ENCODE measurements at regions of chr19 and their contacts with region 1.

Region 1: DNA sequence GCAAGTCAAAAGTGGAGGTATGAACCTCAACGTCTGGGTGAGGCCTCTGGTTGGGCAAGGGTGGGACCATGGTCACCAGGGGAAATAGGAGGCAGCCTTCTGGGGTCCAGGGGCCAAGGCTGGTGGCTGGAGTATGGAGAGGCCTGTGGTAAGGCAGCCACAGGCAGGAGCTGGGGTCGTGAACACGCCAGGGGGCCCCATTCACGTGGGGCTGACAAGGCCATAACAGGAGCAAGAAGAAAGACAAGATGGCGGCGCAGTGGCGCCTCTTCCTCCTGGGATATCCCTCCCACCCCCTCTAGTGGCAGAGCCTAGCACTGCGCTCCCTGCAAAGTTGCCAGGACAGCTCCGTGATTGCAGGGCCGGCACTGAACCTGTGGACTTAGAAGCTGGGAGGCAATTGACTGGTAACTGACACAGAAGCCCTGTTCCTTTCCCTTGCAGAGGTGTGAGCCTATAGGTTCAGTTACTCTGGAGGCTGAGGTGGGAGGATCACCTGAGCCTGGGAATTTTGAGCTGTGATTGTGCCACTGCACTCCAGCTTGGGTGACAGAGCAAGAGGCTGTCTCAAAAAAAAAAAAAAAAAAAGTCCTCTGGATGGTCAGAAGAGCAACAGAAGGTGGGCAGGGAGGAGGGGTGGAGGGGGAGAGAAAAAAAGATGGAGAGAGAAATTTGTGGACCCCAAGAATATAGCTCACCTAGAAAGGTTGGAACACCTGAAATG is 19.7 kb upstream of the EDDM13 start:
- DNase-seq: peak; percentile 45
- H3K4me3 Mint-ChIP-seq: no peak overlapping the region
- H3K27ac Mint-ChIP-seq: no peak overlapping the region
- H3K4me1 Mint-ChIP-seq: no peaks in the 10 kb centered on the region
- H3K27me3 Mint-ChIP-seq: no peaks in the 10 kb centered on the region

Region 2: GRCh38 chr19:56080669-56081401 is 172.0 kb before region 1 on chr19:
- intact Hi-C with region 1: loop called (anchors 2 kb)
- DNase-seq: peak; percentile 43
- H3K4me3 Mint-ChIP-seq: peak overlapping the region; percentile 76
- H3K27ac Mint-ChIP-seq: no peak overlapping the region
- H3K4me1 Mint-ChIP-seq: peaks cover 9% of the 10 kb centered on the region
- H3K27me3 Mint-ChIP-seq: no peaks in the 10 kb centered on the region

Region 3: GRCh38 chr19:56333505-56333904 is 80.6 kb after region 1 on chr19:
- intact Hi-C with region 1: loop called (anchors 1 kb)
- DNase-seq: peak; percentile 28
- H3K4me3 Mint-ChIP-seq: no peak overlapping the region
- H3K27ac Mint-ChIP-seq: no peak overlapping the region
- H3K4me1 Mint-ChIP-seq: no peaks in the 10 kb centered on the region
- H3K27me3 Mint-ChIP-seq: peaks cover 3% of the 10 kb centered on the region

Region 4: DNA sequence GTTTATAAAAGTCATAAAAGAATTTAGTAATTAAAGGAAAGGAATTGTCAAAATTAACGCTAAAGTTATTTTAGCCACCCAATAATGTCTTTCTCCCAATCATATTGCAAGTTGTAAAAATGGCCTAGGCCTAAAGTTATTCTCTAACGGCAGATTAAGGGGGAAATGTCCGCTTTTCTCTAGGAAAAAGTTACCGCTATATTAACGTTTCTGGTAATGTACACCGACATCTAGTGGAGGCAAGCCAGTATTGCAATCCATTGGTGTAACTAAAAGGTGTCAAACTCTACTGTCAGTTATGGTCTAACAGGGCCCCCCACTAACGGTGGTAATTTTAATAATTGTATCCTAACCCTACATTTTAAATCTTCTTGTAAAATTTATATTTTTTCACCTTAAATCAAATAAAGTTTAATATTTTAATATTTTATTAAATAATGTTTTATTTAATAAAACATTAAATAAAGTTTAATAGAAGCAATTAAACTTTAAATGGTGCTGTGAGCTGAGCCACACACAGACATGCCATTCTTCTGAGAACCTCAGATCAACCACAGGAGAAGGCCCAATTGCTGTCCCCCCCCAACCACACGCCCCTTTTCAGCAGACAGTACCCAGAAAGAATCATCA is 97.7 kb after region 1 on chr19:
- intact Hi-C with region 1: loop called (anchors 1 kb)
- DNase-seq: peak; percentile 16
- H3K4me3 Mint-ChIP-seq: no peak overlapping the region
- H3K27ac Mint-ChIP-seq: no peak overlapping the region
- H3K4me1 Mint-ChIP-seq: no peaks in the 10 kb centered on the region
- H3K27me3 Mint-ChIP-seq: no peaks in the 10 kb centered on the region

Measured in activated T-helper 1 cell treated with anti-CD3 and anti-CD28 coated beads, Interleukin-12 subunit alpha, Interleukin-12 subunit beta, Interleukin-2, Interleukin-4 antibody, amounts not matched to agents 30 ng/mL and 10 ng/mL and 1 ng/mL, durations not matched to agents 14 hours and 24 hours and 36 hours (primary cell).